Heart left ventricle (tissue), 16 donors: ENCODE measurements at regions of chr16 and their contacts with region 1.

Region 1: DNA sequence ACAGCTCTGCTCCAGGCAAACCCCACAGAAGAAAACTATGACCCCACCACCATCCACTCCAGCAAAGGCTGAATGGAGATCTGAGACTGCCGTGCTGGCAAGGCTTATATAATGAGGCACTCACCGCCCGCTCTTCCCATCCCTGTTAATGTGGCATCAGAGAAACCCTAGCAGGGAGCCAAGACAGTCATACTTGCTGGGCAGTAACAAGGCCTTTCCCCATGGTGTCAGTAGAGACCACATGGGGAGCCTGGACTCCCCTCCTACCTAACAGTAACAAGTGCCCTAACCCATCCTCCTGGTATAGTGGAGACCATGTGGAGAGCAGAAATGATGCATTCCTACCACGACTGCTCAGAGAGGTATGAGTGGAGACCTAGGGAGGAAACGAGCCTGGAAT is 235.2 kb downstream of the C16orf78 start:
- DNase-seq: no peak
- ATAC-seq: peak; percentile 58 to 90 (median 88)
- H3K4me3 ChIP-seq: no peak overlapping the region
- H3K27ac ChIP-seq: no peak overlapping the region
- H3K4me1 ChIP-seq: peaks cover 0 to 2% (median 0%) of the 10 kb centered on the region in 12 donors
- H3K27me3 ChIP-seq: no peaks in the 10 kb centered on the region
- CTCF ChIP-seq: peak; percentile 31 to 68 (median 56)
- POLR2A ChIP-seq: no peak

Region 2: GRCh38 chr16:49639739-49640431 is 31.1 kb after region 1 on chr16:
- intact Hi-C with region 1: no loop called
- DNase-seq: peak; percentile 63 to 85 (median 73)
- ATAC-seq: peak; percentile 43 to 82 (median 65)
- H3K4me3 ChIP-seq: peak overlapping the region in 1 of 12 donors; percentile 26
- H3K27ac ChIP-seq: peak overlapping the region in 11 of 12 donors; percentile 10 to 69 (median 63)
- H3K4me1 ChIP-seq: peaks cover 2 to 48% (median 32%) of the 10 kb centered on the region in 12 donors
- H3K27me3 ChIP-seq: no peaks in the 10 kb centered on the region
- CTCF ChIP-seq: no peak
- POLR2A ChIP-seq: no peak

Region 3: GRCh38 chr16:49860593-49860992 is 251.8 kb after region 1 on chr16:
- intact Hi-C with region 1: loop called in 5 of 10 experiments (anchors 5 to 10 kb)
- DNase-seq: no peak
- ATAC-seq: no peak
- H3K4me3 ChIP-seq: no peak overlapping the region
- H3K27ac ChIP-seq: no peak overlapping the region
- H3K4me1 ChIP-seq: peaks cover 0 to 26% (median 12%) of the 10 kb centered on the region in 12 donors
- H3K27me3 ChIP-seq: peaks cover 0 to 29% (median 0%) of the 10 kb centered on the region in 9 donors
- CTCF ChIP-seq: no peak
- POLR2A ChIP-seq: no peak

Region 4: DNA sequence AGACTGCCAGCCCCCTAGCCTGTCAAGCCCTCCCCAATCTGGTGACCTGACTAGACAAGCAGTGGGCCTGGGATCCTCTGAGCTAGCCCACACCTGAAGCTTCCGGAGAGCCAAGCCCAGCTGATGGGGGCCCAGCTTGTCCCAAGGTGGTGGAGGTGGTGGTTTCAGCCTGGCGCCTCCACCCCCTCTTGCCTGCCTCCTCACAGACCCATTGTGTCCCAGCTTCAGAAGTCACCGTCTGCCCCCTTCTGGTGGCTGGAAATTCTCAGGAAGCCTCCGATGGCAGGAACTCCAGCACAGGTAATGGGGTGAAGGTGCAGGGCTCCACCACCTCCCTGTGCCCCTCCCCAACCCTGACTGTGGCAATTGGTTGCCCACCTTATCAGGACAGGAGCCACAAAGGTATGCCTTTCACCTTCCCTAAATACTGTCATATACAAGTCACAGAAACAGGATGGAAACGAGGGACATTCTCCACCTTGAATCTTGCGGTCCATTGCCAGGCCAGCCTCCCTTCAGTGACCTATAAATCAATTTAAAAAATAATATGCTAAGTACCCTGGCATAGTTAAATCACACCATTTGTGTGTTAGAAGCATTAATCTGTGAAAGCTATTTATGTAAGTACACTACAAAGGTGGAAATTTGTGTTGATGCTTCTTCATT is 313.1 kb after region 1 on chr16:
- intact Hi-C with region 1: loop called in 7 of 10 experiments (anchors 2 to 5 kb)
- DNase-seq: peak in 4 of 5 donors; percentile 36 to 62 (median 58)
- ATAC-seq: peak; percentile 60 to 85 (median 70)
- H3K4me3 ChIP-seq: no peak overlapping the region
- H3K27ac ChIP-seq: no peak overlapping the region
- H3K4me1 ChIP-seq: no peaks in the 10 kb centered on the region
- H3K27me3 ChIP-seq: peaks cover 0 to 5% (median 0%) of the 10 kb centered on the region in 9 donors
- CTCF ChIP-seq: peak; percentile 33 to 78 (median 64)
- POLR2A ChIP-seq: no peak